Stomach (tissue), 19 donors: ENCODE measurements at regions of chr4 and their contacts with region 1.

Region 1: GRCh38 chr4:68498413-68499007 is 51.2 kb downstream of the TMPRSS11E start:
- DNase-seq: peak; percentile 70 to 91
- H3K4me3 ChIP-seq: no peak overlapping the region
- H3K27ac ChIP-seq: no peak overlapping the region
- H3K4me1 ChIP-seq: peaks cover 0 to 7% (median 0%) of the 10 kb centered on the region in 4 donors
- H3K27me3 ChIP-seq: no peaks in the 10 kb centered on the region
- CTCF ChIP-seq: peak in 5 of 7 experiments; percentile 50 to 73 (median 59)
- EP300 ChIP-seq: no peak
- POLR2A ChIP-seq: no peak

Region 2: DNA sequence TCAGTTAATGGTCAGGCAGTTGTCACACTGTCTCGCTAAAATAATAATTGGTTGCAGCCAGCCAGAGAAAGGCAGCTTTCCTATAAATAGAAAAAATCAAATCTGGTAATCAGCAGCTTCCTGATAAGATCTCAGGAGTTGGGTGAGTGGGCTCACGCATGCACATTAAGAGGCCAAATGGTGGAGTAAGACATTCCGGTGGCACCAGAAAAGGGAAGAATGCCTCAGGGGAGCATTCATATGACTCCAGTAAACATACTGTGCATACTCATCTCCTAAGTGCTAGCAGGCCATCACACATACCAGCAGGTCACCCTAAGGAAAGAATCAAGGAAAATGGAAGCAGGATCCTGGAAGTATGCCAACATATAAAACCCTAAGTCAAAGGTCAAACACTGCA is 131.9 kb after region 1 on chr4:
- intact Hi-C with region 1: loop called (anchors 10 kb)
- DNase-seq: no peak
- H3K4me3 ChIP-seq: no peak overlapping the region
- H3K27ac ChIP-seq: no peak overlapping the region
- H3K4me1 ChIP-seq: peaks cover 0 to 9% (median 0%) of the 10 kb centered on the region in 4 donors
- H3K27me3 ChIP-seq: no peaks in the 10 kb centered on the region
- CTCF ChIP-seq: no peak
- EP300 ChIP-seq: no peak
- POLR2A ChIP-seq: no peak

Region 3: DNA sequence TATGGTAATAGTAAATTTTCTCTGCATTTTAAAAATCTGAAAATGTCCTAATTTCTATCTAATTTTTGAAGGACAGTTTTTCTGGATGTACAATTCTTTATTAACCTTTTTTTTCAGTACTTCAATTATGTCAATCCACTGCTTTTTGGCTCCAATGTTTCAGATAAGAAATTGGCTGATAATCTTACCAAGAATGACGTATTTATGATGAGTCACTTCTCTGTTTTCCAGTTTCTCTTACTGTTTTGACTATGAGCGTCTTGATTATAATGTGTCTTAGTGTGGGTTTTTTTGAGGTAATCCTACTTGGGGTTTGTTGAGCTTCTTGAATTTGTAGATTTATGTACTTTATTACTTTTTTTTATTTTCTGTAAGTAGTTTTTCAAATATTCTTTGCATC is 668.8 kb after region 1 on chr4:
- intact Hi-C with region 1: loop called (anchors 10 kb)
- DNase-seq: no peak
- H3K4me3 ChIP-seq: no peak overlapping the region
- H3K27ac ChIP-seq: no peak overlapping the region
- H3K4me1 ChIP-seq: no peaks in the 10 kb centered on the region
- H3K27me3 ChIP-seq: no peaks in the 10 kb centered on the region
- CTCF ChIP-seq: no peak
- EP300 ChIP-seq: no peak
- POLR2A ChIP-seq: no peak